ENCODE measurements at regions of chr7 and their contacts with region 1.

Region 1: DNA sequence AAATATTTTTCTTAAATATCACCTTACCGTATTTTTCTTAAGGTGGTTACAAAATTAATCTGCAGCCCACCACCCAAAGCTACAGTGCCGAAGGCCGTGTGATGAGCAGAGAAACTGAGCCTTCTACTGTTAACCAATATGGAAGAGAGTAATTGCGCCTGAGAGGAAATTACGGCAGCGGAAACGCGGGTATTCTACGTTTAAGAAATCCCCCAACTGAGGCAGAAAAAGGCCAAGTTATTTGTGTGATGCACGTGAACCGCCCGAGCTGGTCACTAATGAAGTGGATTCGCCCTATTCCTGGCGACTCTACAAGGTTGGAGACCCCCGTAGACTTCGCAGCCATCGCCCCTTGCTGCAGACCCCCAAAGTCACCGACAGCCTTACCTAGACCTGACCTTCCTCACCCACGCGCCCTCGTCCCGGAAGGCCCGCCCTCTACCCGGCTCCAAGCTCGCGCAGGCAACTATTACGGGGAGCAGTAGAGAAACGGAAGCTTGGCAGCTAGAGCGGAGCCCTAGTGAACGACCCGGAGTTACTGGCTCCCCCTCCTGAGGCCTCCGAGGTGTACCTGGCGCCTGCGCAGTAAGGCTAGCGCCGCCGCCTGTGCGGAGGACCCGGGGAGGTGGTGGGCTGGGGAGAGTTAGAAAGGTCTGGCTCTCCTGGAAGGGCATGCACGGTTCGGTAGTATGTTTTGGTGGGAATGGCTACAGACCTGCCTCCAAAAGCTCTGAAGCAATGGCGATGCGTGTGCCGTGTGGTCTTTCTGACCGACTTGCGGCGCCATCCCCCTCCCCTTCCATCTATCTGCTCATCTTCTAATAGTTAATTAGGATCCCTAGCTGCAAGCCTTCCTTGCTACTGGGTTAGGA is at the start of gene MRPS33:
- DNase-seq: peak; percentile 93 to 94 (median 94)
- H3K4me3 ChIP-seq: peak within 1 kb of the TSS; percentile 58
- H3K27ac ChIP-seq: peak within 1 kb of the TSS; percentile 91 to 92
- H3K4me1 ChIP-seq: peaks cover 2% of the 10 kb centered on the region
- H3K27me3 ChIP-seq: no peaks in the 10 kb centered on the region
- CTCF ChIP-seq: no peak
- EP300 ChIP-seq: no peak
- POLR2A ChIP-seq: peak; percentile 81
- total RNA-seq, gene MRPS33: 20.0 to 52.1 (median 41.7) TPM

Region 2: DNA sequence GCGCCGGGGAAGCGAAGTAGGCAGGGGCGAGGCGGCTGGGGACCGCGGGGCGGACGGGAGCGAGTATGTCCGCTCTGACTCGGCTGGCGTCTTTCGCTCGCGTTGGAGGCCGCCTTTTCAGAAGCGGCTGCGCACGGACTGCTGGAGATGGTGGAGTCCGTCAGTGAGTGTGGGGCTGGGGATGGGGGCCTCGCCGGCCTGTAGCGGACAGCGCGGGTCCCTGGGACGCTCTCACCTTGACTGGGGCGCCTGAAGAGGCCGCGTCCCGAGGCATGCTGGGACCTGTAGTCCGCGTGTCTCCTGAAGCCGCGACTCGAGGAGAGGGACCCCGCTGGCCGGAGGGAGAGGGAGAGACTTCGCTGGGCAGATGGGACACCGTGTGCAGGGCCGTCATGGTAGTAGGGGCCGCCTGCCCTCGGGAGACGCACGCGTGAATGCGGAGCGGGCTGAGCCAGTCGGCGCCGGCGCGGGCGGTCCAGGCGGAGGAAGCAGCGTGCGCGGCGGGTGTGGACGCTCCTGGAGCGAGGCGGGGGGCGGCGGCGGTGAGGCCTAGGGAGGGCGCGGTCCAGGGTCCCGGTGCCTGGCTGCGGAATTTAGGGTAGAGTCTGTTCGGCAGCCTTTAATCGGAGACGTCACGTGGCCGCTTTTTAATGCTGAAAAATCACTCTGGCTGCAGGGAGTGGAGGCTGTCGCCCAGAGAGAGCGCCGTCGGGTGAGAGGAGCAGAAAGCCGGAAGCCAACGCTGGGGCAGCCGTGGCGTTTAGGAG is 317.9 kb before region 1 on chr7 and contains the start of gene NDUFB2:
- intact Hi-C with region 1: loop called in 1 of 4 experiments (anchors 5 kb)
- DNase-seq: peak in 2 of 5 donors; percentile 81
- H3K4me3 ChIP-seq: peak within 1 kb of the TSS; percentile 89
- H3K27ac ChIP-seq: peak within 1 kb of the TSS; percentile 77 to 91
- H3K4me1 ChIP-seq: peaks cover 12% of the 10 kb centered on the region
- H3K27me3 ChIP-seq: no peaks in the 10 kb centered on the region
- CTCF ChIP-seq: peak in 2 of 3 donors; percentile 11 to 29
- EP300 ChIP-seq: no peak
- POLR2A ChIP-seq: peak; percentile 94
- total RNA-seq, gene NDUFB2: 79.6 to 172 (median 116) TPM

Region 3: GRCh38 chr7:140810830-140811556 is 203.8 kb before region 1 on chr7:
- intact Hi-C with region 1: loop called in 2 of 4 experiments (anchors 5 to 10 kb)
- DNase-seq: peak in 4 of 5 donors; percentile 21 to 50 (median 36)
- H3K4me3 ChIP-seq: no peak overlapping the region
- H3K27ac ChIP-seq: no peak overlapping the region
- H3K4me1 ChIP-seq: no peaks in the 10 kb centered on the region
- H3K27me3 ChIP-seq: no peaks in the 10 kb centered on the region
- CTCF ChIP-seq: peak; percentile 24 to 57 (median 45)
- EP300 ChIP-seq: no peak
- POLR2A ChIP-seq: no peak

Region 4: GRCh38 chr7:140924019-140924820 is 90.5 kb before region 1 on chr7:
- intact Hi-C with region 1: no loop called
- DNase-seq: peak; percentile 74 to 78 (median 76)
- H3K4me3 ChIP-seq: peak overlapping the region; percentile 98
- H3K27ac ChIP-seq: peak overlapping the region; percentile 92 to 93
- H3K4me1 ChIP-seq: no peaks in the 10 kb centered on the region
- H3K27me3 ChIP-seq: no peaks in the 10 kb centered on the region
- CTCF ChIP-seq: peak in 2 of 3 donors; percentile 23 to 33
- EP300 ChIP-seq: no peak
- POLR2A ChIP-seq: no peak